Dorsolateral prefrontal cortex (tissue), 120 donors: ENCODE measurements at regions of chr3 and their contacts with region 1.

Region 1: DNA sequence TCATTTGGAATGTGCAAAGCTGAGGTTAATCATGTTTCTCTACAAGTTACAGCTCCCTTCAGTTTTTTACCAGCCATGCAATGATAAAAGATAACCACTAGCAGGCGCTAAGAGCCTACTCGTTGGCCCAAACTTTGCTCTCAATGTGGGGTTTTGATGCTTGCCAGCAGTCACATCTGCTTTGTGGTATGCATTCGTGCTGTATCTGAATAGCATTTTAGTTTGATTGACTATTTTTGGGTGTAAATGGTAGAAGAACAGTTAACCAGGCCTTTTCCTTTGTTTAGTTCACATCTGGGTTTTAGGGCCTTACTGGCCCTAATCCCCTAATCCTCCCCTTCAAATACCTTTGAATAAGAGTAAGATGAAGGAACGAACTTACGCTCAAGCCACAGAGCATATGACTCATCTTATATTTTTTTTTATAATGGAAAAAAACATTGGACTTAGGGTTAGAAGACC is 4.4 kb upstream of the CLDN11 start:
- DNase-seq: peak in 2 of 10 donors; percentile 31 to 63
- H3K4me3 ChIP-seq: no peak overlapping the region
- H3K27ac ChIP-seq: peak overlapping the region in 38 of 59 donors; percentile 0 to 73 (median 48)
- H3K27me3 ChIP-seq: peaks cover 0 to 21% (median 3%) of the 10 kb centered on the region in 45 donors
- CTCF ChIP-seq: peak in 55 of 56 donors; percentile 85 to 100 (median 96)

Region 2: GRCh38 chr3:170307671-170308403 is 106.4 kb before region 1 on chr3:
- intact Hi-C with region 1: loop called (anchors 1 to 5 kb)
- DNase-seq: no peak
- H3K4me3 ChIP-seq: no peak overlapping the region
- H3K27ac ChIP-seq: no peak overlapping the region
- H3K27me3 ChIP-seq: no peaks in the 10 kb centered on the region
- CTCF ChIP-seq: no peak

Region 3: DNA sequence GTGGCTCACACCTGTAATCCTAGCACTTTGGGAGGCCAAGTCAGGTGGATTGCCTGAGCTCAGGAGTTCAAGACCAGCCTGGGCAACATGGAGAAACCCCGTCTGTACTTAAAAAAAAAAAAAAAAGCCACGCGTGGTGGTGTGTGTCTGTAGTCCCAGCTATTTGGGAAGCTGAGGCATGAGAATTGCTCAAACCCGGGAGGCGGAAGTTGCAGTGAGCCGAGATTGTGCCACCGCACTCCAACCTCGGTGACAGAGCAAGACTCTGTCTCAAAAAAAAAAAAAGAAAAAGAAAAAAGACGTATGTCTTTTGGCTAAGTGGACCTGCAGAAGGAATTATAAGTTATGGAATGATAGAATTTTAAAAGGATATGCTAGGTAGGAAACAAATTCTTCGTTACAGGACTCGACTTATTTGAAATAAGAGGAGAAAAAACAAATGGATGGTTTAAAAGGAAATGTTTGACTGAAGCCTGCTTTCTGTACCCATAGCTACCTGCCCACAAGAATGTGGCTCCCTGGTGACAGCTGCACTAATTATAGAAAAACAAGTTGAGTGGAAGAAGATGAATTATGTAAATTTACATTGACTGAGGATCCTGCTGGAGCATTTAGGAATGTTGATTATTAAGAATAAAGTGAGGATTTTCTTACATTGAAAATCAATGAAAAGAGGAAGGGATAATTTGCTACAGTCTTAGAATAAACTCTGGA is 92.8 kb before region 1 on chr3:
- intact Hi-C with region 1: no loop called
- DNase-seq: no peak
- H3K4me3 ChIP-seq: no peak overlapping the region
- H3K27ac ChIP-seq: no peak overlapping the region
- H3K27me3 ChIP-seq: no peaks in the 10 kb centered on the region
- CTCF ChIP-seq: no peak

Region 4: DNA sequence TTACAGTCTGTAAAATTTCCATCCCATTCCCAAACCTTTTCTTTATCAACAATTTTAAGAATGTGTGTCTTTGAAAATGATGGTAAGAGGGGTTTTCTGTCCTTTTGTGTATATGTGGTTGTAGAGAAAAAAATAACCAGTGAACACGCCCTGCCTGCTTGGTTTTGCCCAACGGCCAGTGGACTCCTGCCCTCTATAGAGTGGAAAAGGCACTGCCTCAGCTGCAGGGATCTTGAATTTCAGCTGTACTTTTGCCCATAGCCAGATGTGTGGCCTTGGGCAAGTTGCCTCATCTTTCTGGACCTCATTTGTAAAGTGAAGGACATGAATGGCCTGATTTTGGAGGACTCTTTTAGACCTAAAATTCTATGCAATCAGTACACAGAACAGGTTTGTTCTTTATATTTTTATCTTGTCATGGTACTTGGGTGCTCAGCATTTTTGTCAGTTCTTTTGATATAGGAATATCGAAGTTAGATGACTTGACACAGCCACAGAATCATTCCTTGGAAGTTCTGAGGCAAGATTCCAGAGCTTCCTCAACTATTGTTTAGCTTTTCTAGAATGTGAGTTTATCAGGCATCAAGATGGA is 85.4 kb after region 1 on chr3:
- intact Hi-C with region 1: loop called in 1 of 2 experiments (anchors 5 kb)
- DNase-seq: peak in 4 of 10 donors; percentile 51 to 72 (median 64)
- H3K4me3 ChIP-seq: no peak overlapping the region
- H3K27ac ChIP-seq: peak overlapping the region in 51 of 59 donors; percentile 2 to 100 (median 52)
- H3K27me3 ChIP-seq: no peaks in the 10 kb centered on the region
- CTCF ChIP-seq: peak in 55 of 56 donors; percentile 20 to 80 (median 58)

Region 5: GRCh38 chr3:170523248-170523647 is 109.0 kb after region 1 on chr3:
- intact Hi-C with region 1: no loop called
- DNase-seq: no peak
- H3K4me3 ChIP-seq: no peak overlapping the region
- H3K27ac ChIP-seq: no peak overlapping the region
- H3K27me3 ChIP-seq: no peaks in the 10 kb centered on the region
- CTCF ChIP-seq: no peak

Region 6: DNA sequence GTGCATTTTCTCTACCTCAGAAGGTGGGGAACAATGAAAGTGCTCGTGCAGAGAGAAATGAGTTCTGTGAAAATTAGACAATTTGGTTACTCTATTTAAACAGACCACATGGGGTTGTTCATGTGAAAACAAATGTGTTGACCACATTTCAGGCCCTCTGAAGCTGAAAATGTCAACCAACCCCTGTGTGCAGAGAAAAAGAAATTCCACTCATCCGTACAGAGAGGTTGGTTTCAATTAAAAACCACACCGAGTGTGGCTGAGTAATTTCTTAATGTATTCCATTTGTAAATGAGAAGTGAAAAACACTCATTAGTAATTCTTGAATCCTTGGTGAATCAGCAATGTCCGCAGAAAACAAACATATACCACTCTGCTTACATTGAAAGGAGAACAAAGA is 218.5 kb after region 1 on chr3:
- intact Hi-C with region 1: loop called in 1 of 2 experiments (anchors 10 kb)
- DNase-seq: no peak
- H3K4me3 ChIP-seq: no peak overlapping the region
- H3K27ac ChIP-seq: peak overlapping the region in 2 of 59 donors; percentile 15 to 52
- H3K27me3 ChIP-seq: no peaks in the 10 kb centered on the region
- CTCF ChIP-seq: no peak

Region 7: DNA sequence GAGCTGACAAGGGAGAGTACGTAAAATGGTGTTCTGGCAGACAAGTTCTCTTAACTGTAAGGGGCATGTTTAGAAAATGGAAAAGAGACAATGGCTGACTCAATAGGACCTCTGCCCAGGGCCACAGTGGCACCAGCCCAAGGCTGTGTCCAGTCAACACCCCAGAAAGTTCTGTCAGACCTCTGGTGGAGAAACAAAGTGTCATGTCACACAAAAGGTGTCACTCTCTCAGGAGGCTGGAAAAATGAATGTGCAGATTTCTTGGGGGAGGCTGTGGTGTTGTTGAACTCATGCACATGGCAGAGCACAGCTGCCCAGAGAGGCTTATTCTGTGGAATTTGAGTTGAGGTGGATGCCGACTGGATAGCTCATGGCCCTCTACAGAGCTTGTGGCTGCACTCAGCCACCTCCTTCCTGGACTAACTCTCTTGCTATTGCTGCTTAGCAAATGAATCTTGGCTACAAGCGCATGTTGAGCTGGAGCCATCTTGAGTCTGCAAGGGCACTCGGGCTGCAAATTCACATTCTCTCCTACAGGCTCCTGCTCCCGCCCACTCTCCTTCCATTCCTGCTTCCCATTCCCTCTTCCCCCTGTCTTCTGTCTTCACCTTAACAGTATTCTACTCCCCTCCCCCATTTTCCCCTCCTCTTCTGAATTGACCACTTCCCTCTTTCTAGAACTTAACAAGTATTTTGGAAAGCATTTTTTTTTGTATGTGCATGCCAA is 227.4 kb after region 1 on chr3:
- intact Hi-C with region 1: loop called (anchors 5 to 10 kb)
- DNase-seq: peak in 1 of 10 donors; percentile 41
- H3K4me3 ChIP-seq: no peak overlapping the region
- H3K27ac ChIP-seq: peak overlapping the region; percentile 69 to 98 (median 92)
- H3K27me3 ChIP-seq: no peaks in the 10 kb centered on the region
- CTCF ChIP-seq: no peak

Region 8: DNA sequence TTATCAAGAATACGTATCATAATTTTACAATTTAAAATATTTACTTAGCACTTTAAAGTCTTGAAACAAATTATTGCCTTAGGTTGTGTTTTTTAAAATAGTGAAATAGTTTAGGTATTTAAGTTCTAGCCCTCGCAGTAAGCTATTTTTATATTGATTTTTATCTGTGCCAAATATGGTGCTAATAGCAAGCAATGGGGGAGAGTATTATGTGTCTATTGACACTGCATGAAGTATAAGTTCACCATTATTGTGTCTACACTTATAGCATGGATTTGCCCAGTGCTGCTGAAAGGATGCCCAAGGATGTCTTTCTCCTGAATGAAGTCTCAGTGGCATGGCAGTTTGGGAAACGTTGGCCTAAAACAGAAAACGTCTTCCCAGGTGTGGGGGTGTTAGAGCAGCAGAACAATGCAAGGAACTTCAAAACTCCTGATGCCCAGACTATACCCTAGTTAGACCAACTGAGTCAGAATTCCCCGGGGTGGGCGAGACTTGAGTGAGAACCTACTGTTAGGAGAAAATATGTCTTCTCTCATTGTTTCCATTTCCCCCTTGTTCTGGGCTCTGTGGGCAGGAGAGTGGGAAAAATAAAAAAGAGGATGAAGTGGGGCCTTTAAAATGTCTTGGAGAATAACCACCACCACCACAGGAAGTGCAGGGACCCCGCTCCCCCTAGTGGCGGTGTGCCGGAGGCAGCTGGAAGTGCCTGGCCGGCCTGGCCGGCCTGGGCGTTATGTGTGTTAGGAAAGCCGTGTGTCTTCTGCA is 275.8 kb after region 1 on chr3:
- intact Hi-C with region 1: loop called (anchors 2 to 5 kb)
- DNase-seq: peak; percentile 65 to 83 (median 74)
- H3K4me3 ChIP-seq: no peak overlapping the region
- H3K27ac ChIP-seq: peak overlapping the region in 17 of 59 donors; percentile 4 to 64 (median 29)
- H3K27me3 ChIP-seq: no peaks in the 10 kb centered on the region
- CTCF ChIP-seq: peak; percentile 49 to 92 (median 79)